Activated naive CD4-positive, alpha-beta T cell treated with anti-CD3 and anti-CD28 coated beads for 36 hours (primary cell): ENCODE measurements at regions of chr3 and their contacts with region 1.

Region 1: GRCh38 chr3:98556164-98557130 is 24.7 kb downstream of the GPR15 start:
- DNase-seq: peak; percentile 87
- H3K4me3 Mint-ChIP-seq: peak overlapping the region; percentile 30
- H3K27ac Mint-ChIP-seq: peak overlapping the region; percentile 83
- H3K4me1 Mint-ChIP-seq: peaks cover 76% of the 10 kb centered on the region
- H3K27me3 Mint-ChIP-seq: peaks cover 5% of the 10 kb centered on the region

Region 2: DNA sequence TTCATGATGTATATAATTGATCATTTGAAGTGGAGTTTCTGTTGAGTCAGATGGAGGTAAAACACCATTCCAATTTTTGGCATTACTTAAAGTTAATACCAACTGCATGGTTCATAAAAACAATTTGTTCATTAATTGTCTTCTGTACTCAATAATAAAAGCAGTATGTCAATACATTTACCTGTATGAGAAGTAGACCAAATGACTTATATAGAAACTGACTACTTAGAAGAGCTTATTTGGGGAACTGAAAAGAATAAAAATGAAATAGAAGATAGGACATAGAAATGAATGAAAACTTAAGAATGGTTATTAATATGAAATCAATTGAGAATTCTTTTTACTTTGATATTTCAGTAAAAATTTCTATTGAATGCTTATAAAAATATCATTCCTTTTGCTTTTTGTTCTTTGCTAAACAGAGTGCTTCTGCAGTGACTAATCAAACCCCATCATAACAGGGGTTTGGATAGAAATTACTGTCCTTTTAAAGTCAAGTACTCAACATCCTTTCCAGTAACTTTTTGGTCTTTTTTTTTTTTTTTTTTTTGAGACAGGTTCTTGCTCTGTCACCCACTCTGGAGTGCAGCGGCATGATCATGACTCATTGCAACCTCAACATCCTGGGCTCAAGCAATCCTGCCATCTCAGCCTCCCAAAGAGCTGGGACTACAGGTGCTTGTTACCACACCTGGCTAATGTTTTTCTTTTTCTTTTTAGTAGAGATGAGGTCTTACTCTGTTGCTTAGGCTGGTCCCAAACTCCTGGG is 741.1 kb before region 1 on chr3:
- CTCF ChIA-PET with region 1: no interaction called
- intact Hi-C with region 1: loop called (anchors 1 kb)
- DNase-seq: peak; percentile 77
- H3K4me3 Mint-ChIP-seq: no peak overlapping the region
- H3K27ac Mint-ChIP-seq: peak overlapping the region; percentile 66
- H3K4me1 Mint-ChIP-seq: peaks cover 13% of the 10 kb centered on the region
- H3K27me3 Mint-ChIP-seq: peaks cover 1% of the 10 kb centered on the region

Region 3: DNA sequence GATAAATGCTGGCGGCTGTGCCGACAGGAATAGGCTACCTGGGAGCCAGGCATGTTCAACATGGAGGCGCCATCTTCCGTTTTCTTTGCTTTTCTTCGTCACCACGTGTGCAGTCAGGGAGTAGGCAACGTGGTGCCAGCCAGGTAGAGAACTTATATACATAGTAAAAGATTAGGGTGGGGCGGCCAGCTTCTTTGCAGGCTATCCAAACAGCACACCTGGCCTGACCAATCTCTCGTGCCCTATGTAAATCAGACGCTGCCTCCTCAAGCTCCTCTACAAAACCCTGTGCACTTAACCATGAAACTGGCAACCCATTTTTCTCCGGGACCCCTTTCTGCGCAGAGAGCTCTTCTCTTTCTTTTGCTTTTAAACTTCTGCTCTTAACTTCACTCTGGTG is 231.4 kb before region 1 on chr3:
- CTCF ChIA-PET with region 1: no interaction called
- intact Hi-C with region 1: no loop called
- DNase-seq: no peak
- H3K4me3 Mint-ChIP-seq: no peak overlapping the region
- H3K27ac Mint-ChIP-seq: no peak overlapping the region
- H3K4me1 Mint-ChIP-seq: no peaks in the 10 kb centered on the region
- H3K27me3 Mint-ChIP-seq: peaks cover 5% of the 10 kb centered on the region

Region 4: DNA sequence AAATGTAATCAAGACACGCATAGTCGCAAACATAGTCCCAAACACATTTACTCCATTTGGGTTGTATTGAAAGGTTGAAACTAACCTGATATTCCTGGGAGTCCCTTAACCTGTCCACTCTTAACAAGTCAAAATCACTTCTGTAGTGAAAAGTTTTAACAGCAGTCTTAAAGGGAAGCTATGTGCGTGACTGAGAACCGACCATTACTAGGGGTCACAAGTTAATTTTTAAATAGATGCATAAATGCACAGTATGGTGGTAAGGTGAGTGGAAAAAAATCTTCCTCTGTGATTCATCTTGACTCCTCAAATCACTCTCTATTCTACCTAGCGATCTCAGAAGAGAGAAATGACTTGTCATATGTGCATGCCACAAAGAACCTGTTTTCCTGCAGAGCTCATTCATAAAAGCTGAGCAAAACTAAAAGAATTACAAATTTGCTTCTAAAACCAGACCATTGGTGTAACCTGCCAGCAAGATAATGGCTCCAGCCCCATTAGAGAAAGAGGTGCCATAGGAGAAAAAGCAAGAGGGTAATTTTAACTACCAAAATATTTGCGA is 19.9 kb before region 1 on chr3:
- CTCF ChIA-PET with region 1: interaction called, 5 read pairs
- intact Hi-C with region 1: loop called (anchors 1 kb)
- DNase-seq: peak; percentile 14
- H3K4me3 Mint-ChIP-seq: peak overlapping the region; percentile 21
- H3K27ac Mint-ChIP-seq: peak overlapping the region; percentile 50
- H3K4me1 Mint-ChIP-seq: peaks cover 24% of the 10 kb centered on the region
- H3K27me3 Mint-ChIP-seq: peaks cover 6% of the 10 kb centered on the region

Region 5: GRCh38 chr3:98545940-98546339 is 10.5 kb before region 1 on chr3:
- CTCF ChIA-PET with region 1: interaction called, 5 read pairs
- intact Hi-C with region 1: loop called (anchors 1 kb)
- DNase-seq: no peak
- H3K4me3 Mint-ChIP-seq: no peak overlapping the region
- H3K27ac Mint-ChIP-seq: peak overlapping the region; percentile 44
- H3K4me1 Mint-ChIP-seq: peaks cover 17% of the 10 kb centered on the region
- H3K27me3 Mint-ChIP-seq: peaks cover 2% of the 10 kb centered on the region

Region 6: GRCh38 chr3:98726084-98726483 is 169.6 kb after region 1 on chr3:
- CTCF ChIA-PET with region 1: no interaction called
- intact Hi-C with region 1: no loop called
- DNase-seq: no peak
- H3K4me3 Mint-ChIP-seq: no peak overlapping the region
- H3K27ac Mint-ChIP-seq: no peak overlapping the region
- H3K4me1 Mint-ChIP-seq: no peaks in the 10 kb centered on the region
- H3K27me3 Mint-ChIP-seq: peaks cover 32% of the 10 kb centered on the region

Region 7: GRCh38 chr3:98972155-98972554 is 415.7 kb after region 1 on chr3:
- CTCF ChIA-PET with region 1: no interaction called
- intact Hi-C with region 1: loop called (anchors 1 kb)
- DNase-seq: no peak
- H3K4me3 Mint-ChIP-seq: no peak overlapping the region
- H3K27ac Mint-ChIP-seq: no peak overlapping the region
- H3K4me1 Mint-ChIP-seq: peaks cover 6% of the 10 kb centered on the region
- H3K27me3 Mint-ChIP-seq: peaks cover 7% of the 10 kb centered on the region